Sigmoid colon (tissue), 7 donors: ENCODE measurements at regions of chr11 and their contacts with region 1.

Region 1: DNA sequence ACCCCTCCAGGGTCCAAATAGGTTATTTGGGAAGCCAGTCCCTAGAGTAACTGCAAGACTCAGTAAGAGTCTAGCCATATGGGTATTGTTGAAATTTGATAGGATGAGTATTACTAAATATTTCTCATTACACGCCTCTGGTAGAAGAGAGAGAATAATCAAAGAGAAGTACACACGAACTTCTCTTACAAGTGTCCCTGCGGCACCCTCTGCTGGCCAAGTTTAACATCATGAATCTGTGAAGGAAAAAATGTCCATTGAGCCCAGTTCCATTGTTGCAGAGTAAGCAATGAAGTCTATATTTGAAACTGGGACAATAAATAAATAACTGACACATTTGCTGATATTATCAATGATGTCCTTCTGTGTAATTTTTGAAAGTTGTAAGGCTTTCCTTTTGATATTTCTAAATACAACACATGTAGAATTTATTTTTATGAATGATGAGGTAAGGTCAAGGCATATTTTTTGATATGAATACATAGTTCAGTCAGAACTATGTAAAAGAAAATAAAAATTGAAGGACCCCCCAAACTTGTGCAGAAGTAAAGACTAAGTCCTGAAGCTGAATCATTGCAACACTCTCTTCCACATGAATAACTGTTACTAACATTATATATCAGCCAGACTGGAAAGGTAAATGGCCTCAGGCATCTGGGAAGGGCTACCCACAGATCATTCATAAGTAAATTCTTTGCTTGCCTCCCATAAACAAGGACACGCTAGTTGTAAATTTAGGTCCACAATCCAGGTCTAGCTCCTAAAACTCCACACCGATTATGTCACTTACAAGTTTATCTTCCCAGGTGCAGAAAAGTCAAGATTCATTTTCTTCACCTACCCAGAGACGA is 10.0 kb downstream of the OR51L1 start:
- DNase-seq: no peak
- H3K4me3 ChIP-seq: no peak overlapping the region
- H3K27ac ChIP-seq: no peak overlapping the region
- H3K4me1 ChIP-seq: no peaks in the 10 kb centered on the region
- H3K27me3 ChIP-seq: no peaks in the 10 kb centered on the region
- CTCF ChIP-seq: peak in 3 of 4 experiments; percentile 12 to 45 (median 31)
- EP300 ChIP-seq: no peak
- POLR2A ChIP-seq: no peak

Region 2: DNA sequence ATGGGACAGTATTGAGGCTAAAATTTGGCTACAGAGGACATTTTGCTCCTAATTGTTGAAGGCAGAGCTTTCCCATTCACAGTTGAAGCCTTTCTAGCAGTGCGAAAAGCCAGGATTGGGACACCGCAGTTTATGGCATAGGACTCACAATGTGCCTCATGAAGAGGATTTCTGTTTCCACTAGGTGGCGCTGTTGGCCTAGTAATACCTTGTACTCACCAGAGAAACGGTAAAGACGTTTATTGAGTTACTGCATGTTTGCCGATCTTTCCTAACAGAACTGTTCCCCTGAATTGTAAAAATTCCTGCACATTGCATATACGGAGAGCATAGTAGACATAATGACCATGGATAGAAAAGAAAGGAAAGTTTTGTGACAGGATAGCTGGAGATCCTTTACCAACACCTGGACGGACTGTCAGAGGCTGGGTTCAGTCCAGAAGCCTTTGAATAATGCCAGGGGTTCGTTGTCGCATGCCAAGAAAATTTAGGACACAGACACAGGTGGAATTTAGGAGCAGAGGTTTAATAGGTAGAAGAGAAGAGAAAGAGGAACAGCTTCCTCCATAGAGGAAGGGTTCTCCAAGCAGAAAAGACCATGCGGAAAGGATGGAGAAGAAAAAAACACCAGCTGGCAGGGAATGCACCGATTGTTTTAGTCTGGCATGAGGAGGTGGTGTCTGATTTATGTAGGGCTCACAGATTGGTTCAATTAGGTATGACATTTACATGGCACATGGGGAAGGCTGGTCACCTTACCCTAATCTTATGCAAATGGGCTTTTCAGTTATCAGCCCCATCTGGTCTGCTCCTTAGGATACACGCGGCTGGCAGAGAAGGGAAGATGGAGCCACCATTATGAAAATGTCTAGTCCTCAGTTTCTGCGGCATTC is 378.2 kb before region 1 on chr11:
- intact Hi-C with region 1: loop called (anchors 5 kb)
- DNase-seq: peak; percentile 74
- H3K4me3 ChIP-seq: no peak overlapping the region
- H3K27ac ChIP-seq: no peak overlapping the region
- H3K4me1 ChIP-seq: no peaks in the 10 kb centered on the region
- H3K27me3 ChIP-seq: no peaks in the 10 kb centered on the region
- CTCF ChIP-seq: peak; percentile 15 to 75 (median 60)
- EP300 ChIP-seq: no peak
- POLR2A ChIP-seq: no peak

Region 3: DNA sequence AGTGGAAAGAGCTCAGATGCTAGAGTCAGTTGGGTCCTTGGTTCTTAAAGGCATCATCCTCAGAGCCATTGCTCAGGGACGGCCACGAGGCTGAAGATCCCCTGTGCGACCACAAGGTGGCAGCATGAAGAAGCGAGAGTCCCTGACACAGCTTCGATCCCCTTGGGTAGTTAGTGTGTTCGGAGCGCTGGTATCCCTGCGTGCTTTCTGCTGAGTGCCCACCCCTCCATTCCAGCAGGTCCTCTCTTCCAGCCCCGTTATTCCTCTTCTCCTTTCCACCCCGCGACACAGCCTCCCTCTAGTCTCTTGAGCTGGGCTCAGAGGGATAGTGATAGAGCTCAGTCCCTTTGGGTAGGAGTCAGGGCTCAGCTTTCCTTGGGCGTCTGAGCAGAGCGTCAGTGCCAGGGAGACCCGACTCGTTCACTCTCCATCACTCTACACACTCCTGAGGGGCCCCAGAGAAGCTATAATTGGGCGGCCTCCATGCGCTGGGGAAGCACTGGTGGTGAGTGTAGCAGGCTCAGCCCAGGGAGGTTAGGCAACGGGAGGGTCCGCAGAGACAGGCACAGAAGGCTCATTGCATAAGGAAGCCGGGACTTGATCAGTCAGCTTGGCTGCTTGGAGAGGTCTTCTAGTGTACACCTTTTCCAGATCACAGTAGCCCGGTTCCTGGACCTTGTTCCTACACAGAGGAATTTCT is 367.5 kb before region 1 on chr11 and contains the start of gene OR51D1:
- intact Hi-C with region 1: loop called (anchors 5 kb)
- DNase-seq: peak; percentile 80
- H3K4me3 ChIP-seq: peak within 1 kb of the TSS in 2 of 4 donors; percentile 35
- H3K27ac ChIP-seq: no peak within 1 kb of the TSS
- H3K4me1 ChIP-seq: peaks cover 0 to 12% (median 3%) of the 10 kb centered on the region in 4 donors
- H3K27me3 ChIP-seq: no peaks in the 10 kb centered on the region
- CTCF ChIP-seq: peak; percentile 62 to 90 (median 85)
- EP300 ChIP-seq: no peak
- POLR2A ChIP-seq: no peak
- total RNA-seq, gene OR51D1: not detected